Gastrocnemius medialis (tissue), 4 donors: ENCODE measurements at regions of chr2 and their contacts with region 1.

Region 1: DNA sequence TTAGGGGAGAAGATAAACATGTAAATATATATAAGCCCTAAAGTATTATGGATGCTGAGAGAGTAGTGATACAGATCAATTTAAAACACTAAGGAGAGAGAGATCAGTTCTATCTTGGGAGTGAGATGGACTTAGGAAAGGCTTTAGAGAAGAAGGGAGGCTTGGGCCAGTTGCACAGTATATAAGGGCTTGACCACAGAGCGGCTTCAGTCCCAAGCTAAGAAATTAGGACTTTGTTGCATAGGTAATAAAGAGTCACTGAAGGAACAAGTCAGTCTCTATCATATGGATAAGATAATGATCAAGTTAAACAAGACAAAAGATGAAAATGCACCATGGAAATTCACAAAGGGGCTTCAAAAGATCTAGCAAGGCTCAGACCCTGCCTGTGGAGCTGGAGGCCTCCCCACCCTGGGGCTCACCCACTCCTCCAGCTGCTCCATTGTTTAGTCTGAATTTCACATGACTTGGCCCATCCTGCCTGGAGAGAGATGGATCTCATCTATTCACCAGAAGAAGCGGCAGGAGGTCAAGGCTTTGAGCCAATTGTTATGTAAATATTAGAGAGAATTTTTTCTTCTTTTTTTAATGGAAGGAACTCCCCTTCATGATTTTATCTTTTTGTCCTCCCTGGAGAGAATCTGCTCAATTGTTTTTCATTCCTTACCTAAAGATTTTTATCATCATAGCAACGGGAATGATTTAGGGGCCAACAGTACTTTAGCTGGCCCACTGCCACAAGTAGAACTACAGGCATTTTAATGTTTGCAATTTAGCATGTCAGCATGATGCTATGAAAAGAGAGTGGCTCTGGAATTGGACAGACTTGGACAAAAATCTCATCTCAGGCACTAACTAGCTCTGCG is 44.0 kb downstream of the GYPC start:
- DNase-seq: no peak
- ATAC-seq: no peak
- H3K4me3 ChIP-seq: no peak overlapping the region
- H3K27ac ChIP-seq: peak overlapping the region; percentile 25 to 84 (median 58)
- H3K4me1 ChIP-seq: peaks cover 34 to 58% of the 10 kb centered on the region in 2 donors
- H3K27me3 ChIP-seq: no peaks in the 10 kb centered on the region
- CTCF ChIP-seq: no peak
- POLR2A ChIP-seq: no peak

Region 2: DNA sequence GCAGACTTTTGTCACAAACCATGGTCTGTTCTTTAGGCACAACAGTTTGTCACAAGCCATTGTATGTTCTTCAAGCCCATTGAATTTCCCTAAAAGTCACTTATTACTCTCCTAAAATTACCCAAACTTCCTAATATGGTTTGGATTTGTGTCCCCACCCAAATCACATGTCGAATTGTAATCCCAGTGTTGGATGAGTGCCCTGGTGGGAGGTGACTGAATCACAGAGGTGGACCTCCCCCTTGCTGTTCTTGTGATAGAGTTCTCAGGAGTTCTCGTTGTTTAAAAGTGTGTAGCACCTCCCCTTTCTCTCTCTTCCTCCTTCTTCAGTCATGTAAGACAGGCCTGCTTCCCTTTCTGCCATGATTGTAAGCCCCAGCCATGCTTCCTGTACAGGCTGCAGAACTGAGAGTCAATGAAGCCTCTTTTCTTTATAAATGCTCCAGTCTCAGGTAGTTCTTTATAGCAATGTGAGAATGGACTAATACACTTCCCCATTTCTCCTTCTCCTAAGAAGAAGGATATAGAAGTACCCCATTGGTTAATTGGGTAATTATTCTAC is 55.2 kb before region 1 on chr2:
- in situ Hi-C with region 1: no loop called
- intact Hi-C with region 1: loop called (anchors 5 kb)
- DNase-seq: no peak
- ATAC-seq: no peak
- H3K4me3 ChIP-seq: no peak overlapping the region
- H3K27ac ChIP-seq: no peak overlapping the region
- H3K4me1 ChIP-seq: peaks cover 6 to 7% of the 10 kb centered on the region in 2 donors
- H3K27me3 ChIP-seq: no peaks in the 10 kb centered on the region
- CTCF ChIP-seq: no peak
- POLR2A ChIP-seq: no peak

Region 3: GRCh38 chr2:126664234-126664633 is 35.7 kb before region 1 on chr2:
- in situ Hi-C with region 1: no loop called
- intact Hi-C with region 1: loop called (anchors 5 kb)
- DNase-seq: no peak
- ATAC-seq: peak in 1 of 2 donors; percentile 18
- H3K4me3 ChIP-seq: no peak overlapping the region
- H3K27ac ChIP-seq: peak overlapping the region; percentile 53 to 99 (median 84)
- H3K4me1 ChIP-seq: peaks cover 86 to 87% of the 10 kb centered on the region in 2 donors
- H3K27me3 ChIP-seq: no peaks in the 10 kb centered on the region
- CTCF ChIP-seq: no peak
- POLR2A ChIP-seq: no peak

Region 4: DNA sequence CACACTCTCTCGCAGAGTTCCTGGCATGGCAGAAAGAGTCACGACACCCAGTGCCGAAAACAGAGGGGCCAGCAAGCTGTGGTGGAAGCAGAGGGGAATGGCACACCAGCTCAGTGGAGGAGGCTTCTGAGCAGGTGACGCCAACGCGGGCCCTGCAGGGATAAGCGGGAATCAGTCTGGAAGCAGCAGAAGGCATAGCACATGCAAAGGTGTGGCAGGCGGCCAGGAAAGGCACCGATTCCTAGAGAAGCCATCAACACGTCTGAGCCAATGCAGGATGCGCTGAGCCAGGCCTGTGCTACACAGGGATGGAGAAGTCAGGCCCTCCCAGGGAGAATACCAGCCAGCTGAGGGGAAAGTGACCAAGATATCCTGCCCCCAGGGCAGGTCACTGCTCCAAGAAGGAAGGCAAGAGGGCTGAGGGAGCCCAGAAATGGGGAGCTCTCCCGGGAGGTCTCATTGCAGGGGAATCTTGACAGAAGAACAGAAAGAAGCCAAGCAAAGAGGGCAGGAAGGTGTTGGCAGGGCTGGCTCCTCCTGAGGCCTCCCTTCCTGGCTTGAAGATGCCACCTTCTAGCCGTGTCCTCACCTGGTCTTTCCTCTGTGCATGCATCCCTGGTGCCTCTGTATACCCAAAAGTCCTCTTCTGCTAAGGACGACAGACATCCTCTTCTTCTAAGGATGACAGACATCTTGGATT is 215.0 kb after region 1 on chr2:
- in situ Hi-C with region 1: no loop called
- intact Hi-C with region 1: no loop called
- DNase-seq: no peak
- ATAC-seq: no peak
- H3K4me3 ChIP-seq: no peak overlapping the region
- H3K27ac ChIP-seq: no peak overlapping the region
- H3K4me1 ChIP-seq: no peaks in the 10 kb centered on the region
- H3K27me3 ChIP-seq: peaks cover 0 to 2% (median 0%) of the 10 kb centered on the region in 3 donors
- CTCF ChIP-seq: no peak
- POLR2A ChIP-seq: no peak